A549 (cell line): ENCODE measurements at regions of chr15 and their contacts with region 1.

Region 1: DNA sequence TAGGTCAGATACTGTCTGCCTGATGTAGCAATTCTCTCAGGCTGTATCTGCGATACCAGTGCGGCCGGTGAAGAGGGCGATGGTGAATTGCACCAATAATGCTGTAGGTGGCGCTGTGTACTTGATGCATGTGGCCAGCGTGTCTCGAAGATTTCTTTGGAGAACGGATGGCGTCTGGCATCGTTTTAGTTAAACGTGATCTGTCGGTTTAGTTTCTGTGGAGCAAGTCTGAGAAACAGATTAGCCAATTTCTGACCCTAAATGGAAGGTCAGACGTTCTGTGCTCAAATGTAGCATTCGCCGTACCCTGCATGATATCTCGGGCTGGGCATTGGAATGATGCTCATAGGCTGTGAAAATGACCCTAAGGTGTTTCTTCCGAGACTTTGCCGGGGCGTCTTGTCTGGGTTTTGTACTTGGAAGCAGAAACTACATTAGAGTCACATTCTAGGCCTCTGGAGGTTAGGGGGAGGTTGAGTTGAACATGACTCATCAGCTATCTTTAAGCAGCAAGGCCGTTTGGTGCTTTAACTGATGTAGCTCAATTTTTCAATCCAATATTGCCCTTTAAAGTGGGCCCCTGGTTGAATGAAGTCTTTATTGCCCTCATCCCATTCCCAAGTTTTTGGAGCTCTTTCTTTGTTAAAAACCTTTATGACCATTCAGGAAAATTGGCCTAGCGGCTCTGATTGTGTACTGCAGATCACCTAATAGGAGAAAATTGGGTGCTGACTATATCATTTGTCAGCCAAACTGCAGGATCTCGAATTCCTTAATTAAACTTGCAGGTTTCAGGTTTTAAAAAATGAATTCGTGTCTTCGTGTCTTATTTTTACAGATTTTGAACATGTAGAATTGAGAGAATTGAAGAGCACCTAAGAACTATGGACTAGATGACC is 80.0 kb downstream of the SQOR start:
- DNase-seq: peak in 1 of 2 experiments; percentile 60
- ATAC-seq: peak; percentile 64 to 85; a peak in 5 of 6 replicates
- H3K4me3 ChIP-seq: no peak overlapping the region
- H3K27ac ChIP-seq: no peak overlapping the region
- H3K4me1 ChIP-seq: 0 out of 3 replicates have a peak, but pooled peaks cover 2% of the 10 kb centered on the region
- CTCF ChIP-seq: peak; percentile 59
- EP300 ChIP-seq: no peak
- POLR2A ChIP-seq: no peak
- RAD21 ChIP-seq: peak; percentile 62 to 73

Region 2: GRCh38 chr15:45648521-45649200 is 66.2 kb before region 1 on chr15:
- CTCF ChIA-PET with region 1: no interaction called
- POLR2A ChIA-PET with region 1: no interaction called
- DNase-seq: peak; percentile 24 to 42
- ATAC-seq: peak; percentile 62
- H3K4me3 ChIP-seq: no peak overlapping the region
- H3K27ac ChIP-seq: peak overlapping the region; percentile 52 to 83
- H3K4me1 ChIP-seq: peaks cover 57% of the 10 kb centered on the region
- CTCF ChIP-seq: no peak
- EP300 ChIP-seq: no peak
- POLR2A ChIP-seq: no peak
- RAD21 ChIP-seq: no peak

Region 3: GRCh38 chr15:45690581-45691260 is 24.1 kb before region 1 on chr15:
- CTCF ChIA-PET with region 1: no interaction called
- POLR2A ChIA-PET with region 1: no interaction called
- DNase-seq: no peak
- ATAC-seq: no peak
- H3K4me3 ChIP-seq: no peak overlapping the region
- H3K27ac ChIP-seq: no peak overlapping the region
- H3K4me1 ChIP-seq: no peaks in the 10 kb centered on the region
- CTCF ChIP-seq: no peak
- EP300 ChIP-seq: no peak
- POLR2A ChIP-seq: no peak
- RAD21 ChIP-seq: no peak

Region 4: GRCh38 chr15:45729141-45729540 is 14.3 kb after region 1 on chr15:
- CTCF ChIA-PET with region 1: interaction called, 10 read pairs
- POLR2A ChIA-PET with region 1: no interaction called
- DNase-seq: no peak
- ATAC-seq: no peak
- H3K4me3 ChIP-seq: no peak overlapping the region
- H3K27ac ChIP-seq: no peak overlapping the region
- H3K4me1 ChIP-seq: no peaks in the 10 kb centered on the region
- CTCF ChIP-seq: no peak
- EP300 ChIP-seq: no peak
- POLR2A ChIP-seq: no peak
- RAD21 ChIP-seq: no peak

Region 5: GRCh38 chr15:46014532-46014931 is 299.7 kb after region 1 on chr15:
- CTCF ChIA-PET with region 1: no interaction called
- POLR2A ChIA-PET with region 1: no interaction called
- DNase-seq: no peak
- ATAC-seq: no peak
- H3K4me3 ChIP-seq: no peak overlapping the region
- H3K27ac ChIP-seq: no peak overlapping the region
- H3K4me1 ChIP-seq: no peaks in the 10 kb centered on the region
- CTCF ChIP-seq: no peak
- EP300 ChIP-seq: no peak
- POLR2A ChIP-seq: no peak
- RAD21 ChIP-seq: no peak